ENCODE measurements at regions of chr4 and their contacts with region 1.

Region 1: GRCh38 chr4:138444260-138444659 is 202.1 kb upstream of the SLC7A11 start:
- DNase-seq: no peak
- ATAC-seq: no peak
- H3K4me3 ChIP-seq: no peak overlapping the region
- H3K27ac ChIP-seq: no peak overlapping the region
- H3K4me1 ChIP-seq: no peaks in the 10 kb centered on the region
- H3K27me3 ChIP-seq: no peaks in the 10 kb centered on the region
- CTCF ChIP-seq: no peak
- POLR2A ChIP-seq: no peak

Region 2: GRCh38 chr4:138275764-138276621 is 168.3 kb before region 1 on chr4:
- intact Hi-C with region 1: no loop called
- DNase-seq: no peak
- ATAC-seq: peak in 1 of 4 donors; percentile 53
- H3K4me3 ChIP-seq: no peak overlapping the region
- H3K27ac ChIP-seq: no peak overlapping the region
- H3K4me1 ChIP-seq: no peaks in the 10 kb centered on the region
- H3K27me3 ChIP-seq: no peaks in the 10 kb centered on the region
- CTCF ChIP-seq: no peak
- POLR2A ChIP-seq: no peak

Region 3: GRCh38 chr4:138487670-138488069 is 43.4 kb after region 1 on chr4:
- intact Hi-C with region 1: loop called in 1 of 10 experiments (anchors 5 kb)
- DNase-seq: no peak
- ATAC-seq: no peak
- H3K4me3 ChIP-seq: no peak overlapping the region
- H3K27ac ChIP-seq: no peak overlapping the region
- H3K4me1 ChIP-seq: peaks cover 0 to 9% (median 0%) of the 10 kb centered on the region in 12 donors
- H3K27me3 ChIP-seq: no peaks in the 10 kb centered on the region
- CTCF ChIP-seq: no peak
- POLR2A ChIP-seq: no peak

Region 4: DNA sequence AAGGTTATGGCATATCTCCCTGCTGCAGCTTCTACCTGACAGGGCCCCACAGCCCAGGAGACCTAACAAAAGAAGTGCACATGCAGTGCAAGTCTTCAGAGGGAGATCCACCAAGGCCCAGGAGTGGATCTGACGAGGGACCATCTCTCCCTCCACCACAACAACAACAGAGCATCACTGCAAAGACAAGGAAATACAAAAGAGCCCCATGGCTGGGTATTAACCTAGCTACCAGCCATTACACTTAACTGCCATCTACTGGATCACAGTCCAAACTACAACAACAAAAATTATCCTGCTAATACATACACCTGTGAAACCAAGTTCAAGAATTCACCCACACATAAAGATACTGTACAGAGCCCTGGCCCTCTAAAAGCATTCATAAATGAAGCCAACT is 78.1 kb after region 1 on chr4:
- intact Hi-C with region 1: no loop called
- DNase-seq: no peak
- ATAC-seq: no peak
- H3K4me3 ChIP-seq: no peak overlapping the region
- H3K27ac ChIP-seq: no peak overlapping the region
- H3K4me1 ChIP-seq: no peaks in the 10 kb centered on the region
- H3K27me3 ChIP-seq: no peaks in the 10 kb centered on the region
- CTCF ChIP-seq: peak in 3 of 12 donors; percentile 10 to 18 (median 14)
- POLR2A ChIP-seq: no peak